A673 (cell line): ENCODE measurements at regions of chr11 and their contacts with region 1.

Region 1: GRCh38 chr11:12963792-12964536 is 45.2 kb upstream of the RASSF10 start:
- DNase-seq: peak; percentile 78
- H3K4me3 ChIP-seq: no peak overlapping the region
- H3K27ac ChIP-seq: no peak overlapping the region
- H3K4me1 ChIP-seq: no peaks in the 10 kb centered on the region
- H3K27me3 ChIP-seq: no peaks in the 10 kb centered on the region
- CTCF ChIP-seq: peak; percentile 85

Region 2: DNA sequence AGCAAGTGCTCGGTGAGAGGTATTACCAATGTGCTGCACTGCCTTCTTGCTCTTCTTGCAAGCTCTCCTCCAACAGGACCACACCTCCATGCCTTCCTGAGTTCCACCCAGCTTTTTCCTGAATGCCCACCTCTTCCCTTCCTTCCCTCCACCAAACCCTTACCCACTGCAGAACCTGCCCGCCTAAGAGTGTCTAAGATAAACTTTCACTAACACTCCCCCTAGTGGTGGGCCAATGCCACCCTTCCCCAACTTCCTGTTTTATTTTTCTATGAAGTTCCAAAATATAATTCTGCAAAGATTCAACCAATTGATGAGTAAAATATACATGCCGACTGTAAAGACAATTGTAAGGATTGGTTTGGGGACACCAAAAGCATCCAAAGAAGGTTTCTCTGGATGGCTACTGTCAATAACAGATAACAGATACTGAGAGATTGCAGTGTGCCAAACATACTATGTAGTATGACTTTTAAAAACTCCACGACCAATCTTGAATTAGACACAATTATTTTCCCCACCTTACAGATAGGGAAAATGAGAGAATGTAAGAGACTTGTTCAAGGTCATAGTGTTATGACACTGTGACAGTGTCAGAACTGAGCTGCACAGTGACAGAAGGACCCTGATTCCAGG is 275.0 kb after region 1 on chr11:
- CTCF ChIA-PET with region 1: no interaction called
- POLR2A ChIA-PET with region 1: no interaction called
- intact Hi-C with region 1: loop called (anchors 1 kb)
- DNase-seq: peak; percentile 73
- H3K4me3 ChIP-seq: no peak overlapping the region
- H3K27ac ChIP-seq: no peak overlapping the region
- H3K4me1 ChIP-seq: no peaks in the 10 kb centered on the region
- H3K27me3 ChIP-seq: peaks cover 3% of the 10 kb centered on the region
- CTCF ChIP-seq: peak; percentile 85

Region 3: DNA sequence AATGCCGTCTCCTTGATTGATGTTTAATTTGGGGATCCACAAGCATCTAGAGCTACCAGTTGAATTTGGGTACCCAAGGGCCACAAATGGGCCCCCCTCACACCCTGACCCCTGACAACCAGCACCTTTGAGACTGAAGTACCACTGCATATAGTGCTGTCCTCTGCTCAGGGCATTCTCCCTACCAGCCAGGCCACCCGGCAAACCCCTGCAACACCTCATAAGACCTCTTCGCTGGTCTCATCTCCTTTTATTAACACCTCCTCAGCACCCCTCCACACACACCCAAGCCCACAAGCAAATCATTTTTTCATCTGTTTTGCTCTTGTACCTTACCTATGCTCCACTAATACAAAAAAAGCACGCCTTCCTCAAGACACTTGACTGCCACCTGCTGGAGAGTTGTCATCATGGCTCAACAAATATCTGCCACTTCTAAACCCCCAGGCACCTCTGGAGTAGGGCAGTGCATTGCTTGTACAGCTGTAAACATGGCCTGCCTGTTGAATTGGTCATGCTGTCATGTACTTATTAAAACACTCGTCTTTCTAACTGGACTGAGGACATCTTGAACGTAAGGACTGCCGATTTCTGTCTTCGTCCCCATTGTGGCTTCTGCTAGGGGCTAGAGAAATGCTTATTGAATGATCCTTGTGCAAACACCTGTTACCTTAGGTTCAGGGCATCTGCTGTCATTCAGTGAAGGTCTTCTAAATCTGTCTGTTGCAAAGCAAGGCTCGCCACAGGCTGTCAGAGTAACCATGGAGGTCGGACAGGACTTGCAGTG is 380.2 kb after region 1 on chr11:
- CTCF ChIA-PET with region 1: no interaction called
- POLR2A ChIA-PET with region 1: no interaction called
- intact Hi-C with region 1: loop called (anchors 5 kb)
- DNase-seq: peak; percentile 79
- H3K4me3 ChIP-seq: no peak overlapping the region
- H3K27ac ChIP-seq: no peak overlapping the region
- H3K4me1 ChIP-seq: no peaks in the 10 kb centered on the region
- H3K27me3 ChIP-seq: no peaks in the 10 kb centered on the region
- CTCF ChIP-seq: peak; percentile 81